Right ventricle myocardium superior (tissue), 1 donor: ENCODE measurements at regions of chr14 and their contacts with region 1.

Region 1: GRCh38 chr14:37150414-37150813 is 22.0 kb downstream of the SLC25A21 start:
- DNase-seq: no peak
- ATAC-seq: no peak

Region 2: GRCh38 chr14:36553656-36554260 is 596.7 kb before region 1 on chr14:
- intact Hi-C with region 1: loop called (anchors 10 kb)
- DNase-seq: no peak
- ATAC-seq: peak; percentile 46

Region 3: DNA sequence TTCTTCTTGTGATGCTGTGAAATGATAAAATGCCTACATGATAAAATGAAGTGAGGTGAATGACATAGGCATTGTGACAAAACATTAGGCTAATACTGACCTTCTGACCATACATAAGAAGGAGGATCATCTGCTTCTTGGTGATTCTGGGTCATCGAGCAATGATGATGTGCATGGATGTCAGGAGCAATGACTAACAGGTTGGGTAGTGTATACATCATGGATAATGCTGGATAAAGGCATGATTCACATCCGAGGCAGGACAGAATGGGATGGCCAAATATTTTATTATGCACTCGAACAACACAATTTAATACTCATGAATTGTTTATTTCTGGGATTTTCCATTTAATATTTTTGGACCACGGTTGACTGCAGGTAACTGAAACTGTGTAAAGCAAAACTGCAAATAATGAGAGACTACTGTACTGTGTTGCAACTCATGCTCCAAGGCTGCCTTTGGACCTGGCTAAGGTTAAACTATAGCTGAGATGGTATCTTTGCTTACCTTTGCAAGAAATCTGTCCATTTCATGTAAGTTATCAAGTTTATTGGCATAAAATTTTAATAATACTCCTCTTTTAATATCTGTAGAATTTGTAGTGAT is 29.6 kb after region 1 on chr14:
- intact Hi-C with region 1: no loop called
- DNase-seq: no peak
- ATAC-seq: no peak